Mammary epithelial cell (primary cell): ENCODE measurements at regions of chr14 and their contacts with region 1.

Region 1: GRCh38 chr14:22556990-22557623 is 31.9 kb downstream of the DAD1 start:
- DNase-seq: peak; percentile 67
- H3K4me3 ChIP-seq: peak overlapping the region in 2 of 3 experiments; percentile 27 to 41
- H3K27ac ChIP-seq: peak overlapping the region; percentile 48
- H3K4me1 ChIP-seq: peaks cover 28% of the 10 kb centered on the region
- H3K27me3 ChIP-seq: no peaks in the 10 kb centered on the region
- CTCF ChIP-seq: peak; percentile 85

Region 2: DNA sequence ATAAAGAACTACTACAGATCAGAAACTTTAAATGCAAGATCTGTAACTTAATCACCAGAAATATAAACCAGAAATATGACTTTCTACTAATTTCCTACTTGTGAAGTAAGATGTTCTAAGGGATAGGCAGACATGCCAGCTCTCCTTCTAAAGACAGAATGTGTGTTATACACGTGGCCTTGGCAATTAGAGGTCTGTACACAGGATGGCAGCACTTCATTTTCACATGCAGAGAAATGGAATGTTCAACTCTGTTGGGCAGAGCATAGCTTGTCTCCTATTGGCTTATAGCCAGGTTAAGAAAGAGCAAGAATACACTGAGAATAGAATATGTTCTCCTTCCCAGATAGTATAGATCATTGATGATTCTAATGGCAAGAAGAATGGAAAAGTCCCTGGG is 371.9 kb before region 1 on chr14:
- CTCF ChIA-PET with region 1: no interaction called
- dilution Hi-C with region 1: no loop called
- in situ Hi-C with region 1: no loop called
- intact Hi-C with region 1: no loop called
- DNase-seq: peak; percentile 25
- H3K4me3 ChIP-seq: no peak overlapping the region
- H3K27ac ChIP-seq: no peak overlapping the region
- H3K4me1 ChIP-seq: no peaks in the 10 kb centered on the region
- H3K27me3 ChIP-seq: no peaks in the 10 kb centered on the region
- CTCF ChIP-seq: peak in 1 of 2 donors; percentile 32

Region 3: DNA sequence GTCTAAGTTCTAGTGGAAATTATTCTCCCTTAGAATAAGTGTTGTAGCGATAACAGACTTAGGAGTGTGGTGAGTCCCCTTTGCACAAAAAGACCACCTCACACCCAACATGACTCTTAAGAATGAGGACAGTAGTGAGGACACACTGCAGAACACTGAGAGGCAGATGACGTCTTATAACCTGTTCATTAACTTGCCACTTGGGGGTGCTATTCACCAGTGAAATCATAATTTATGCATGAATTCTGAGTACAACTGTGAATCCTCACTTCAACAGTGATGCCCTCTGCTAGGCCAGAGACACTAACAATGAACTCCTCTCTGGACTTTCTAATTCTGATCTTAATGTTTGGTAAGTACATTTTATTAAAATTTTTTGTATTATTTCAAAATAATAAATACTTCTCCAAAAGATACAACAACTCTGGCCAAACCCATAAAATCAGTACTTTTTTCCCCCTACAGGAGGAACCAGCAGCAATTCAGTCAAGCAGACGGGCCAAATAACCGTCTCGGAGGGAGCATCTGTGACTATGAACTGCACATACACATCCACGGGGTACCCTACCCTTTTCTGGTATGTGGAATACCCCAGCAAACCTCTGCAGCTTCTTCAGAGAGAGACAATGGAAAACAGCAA is 242.8 kb before region 1 on chr14:
- CTCF ChIA-PET with region 1: no interaction called
- dilution Hi-C with region 1: no loop called
- in situ Hi-C with region 1: no loop called
- intact Hi-C with region 1: loop called (anchors 5 kb)
- DNase-seq: peak; percentile 51
- H3K4me3 ChIP-seq: no peak overlapping the region
- H3K27ac ChIP-seq: no peak overlapping the region
- H3K4me1 ChIP-seq: peaks cover 7% of the 10 kb centered on the region
- H3K27me3 ChIP-seq: no peaks in the 10 kb centered on the region
- CTCF ChIP-seq: peak; percentile 67 to 71

Region 4: GRCh38 chr14:22491683-22492621 is 65.2 kb before region 1 on chr14:
- CTCF ChIA-PET with region 1: no interaction called
- dilution Hi-C with region 1: no loop called
- in situ Hi-C with region 1: no loop called
- intact Hi-C with region 1: loop called (anchors 2 kb)
- DNase-seq: no peak
- H3K4me3 ChIP-seq: no peak overlapping the region
- H3K27ac ChIP-seq: no peak overlapping the region
- H3K4me1 ChIP-seq: no peaks in the 10 kb centered on the region
- H3K27me3 ChIP-seq: peaks cover 6% of the 10 kb centered on the region
- CTCF ChIP-seq: no peak

Region 5: GRCh38 chr14:22614224-22614799 is 57.2 kb after region 1 on chr14:
- CTCF ChIA-PET with region 1: no interaction called
- dilution Hi-C with region 1: no loop called
- in situ Hi-C with region 1: no loop called
- intact Hi-C with region 1: no loop called
- DNase-seq: peak; percentile 91
- H3K4me3 ChIP-seq: no peak overlapping the region
- H3K27ac ChIP-seq: peak overlapping the region; percentile 71
- H3K4me1 ChIP-seq: peaks cover 18% of the 10 kb centered on the region
- H3K27me3 ChIP-seq: no peaks in the 10 kb centered on the region
- CTCF ChIP-seq: no peak

Region 6: GRCh38 chr14:22653012-22653621 is 96.0 kb after region 1 on chr14:
- CTCF ChIA-PET with region 1: interaction called, 4 read pairs
- dilution Hi-C with region 1: no loop called
- in situ Hi-C with region 1: loop called in 1 of 2 experiments (anchors 5 kb)
- intact Hi-C with region 1: loop called (anchors 1 kb)
- DNase-seq: peak; percentile 67
- H3K4me3 ChIP-seq: no peak overlapping the region
- H3K27ac ChIP-seq: no peak overlapping the region
- H3K4me1 ChIP-seq: no peaks in the 10 kb centered on the region
- H3K27me3 ChIP-seq: no peaks in the 10 kb centered on the region
- CTCF ChIP-seq: peak; percentile 95 to 98

Region 7: GRCh38 chr14:22766456-22767322 is 209.6 kb after region 1 on chr14 and contains the start of gene OXA1L:
- CTCF ChIA-PET with region 1: no interaction called
- dilution Hi-C with region 1: no loop called
- in situ Hi-C with region 1: no loop called
- intact Hi-C with region 1: loop called (anchors 5 kb)
- DNase-seq: peak; percentile 94
- H3K4me3 ChIP-seq: peak within 1 kb of the TSS; percentile 76 to 96 (median 78)
- H3K27ac ChIP-seq: peak within 1 kb of the TSS; percentile 92
- H3K4me1 ChIP-seq: peaks cover 12% of the 10 kb centered on the region
- H3K27me3 ChIP-seq: no peaks in the 10 kb centered on the region
- CTCF ChIP-seq: no peak
- total RNA-seq, gene OXA1L: 34.3 to 76.3 TPM

Region 8: DNA sequence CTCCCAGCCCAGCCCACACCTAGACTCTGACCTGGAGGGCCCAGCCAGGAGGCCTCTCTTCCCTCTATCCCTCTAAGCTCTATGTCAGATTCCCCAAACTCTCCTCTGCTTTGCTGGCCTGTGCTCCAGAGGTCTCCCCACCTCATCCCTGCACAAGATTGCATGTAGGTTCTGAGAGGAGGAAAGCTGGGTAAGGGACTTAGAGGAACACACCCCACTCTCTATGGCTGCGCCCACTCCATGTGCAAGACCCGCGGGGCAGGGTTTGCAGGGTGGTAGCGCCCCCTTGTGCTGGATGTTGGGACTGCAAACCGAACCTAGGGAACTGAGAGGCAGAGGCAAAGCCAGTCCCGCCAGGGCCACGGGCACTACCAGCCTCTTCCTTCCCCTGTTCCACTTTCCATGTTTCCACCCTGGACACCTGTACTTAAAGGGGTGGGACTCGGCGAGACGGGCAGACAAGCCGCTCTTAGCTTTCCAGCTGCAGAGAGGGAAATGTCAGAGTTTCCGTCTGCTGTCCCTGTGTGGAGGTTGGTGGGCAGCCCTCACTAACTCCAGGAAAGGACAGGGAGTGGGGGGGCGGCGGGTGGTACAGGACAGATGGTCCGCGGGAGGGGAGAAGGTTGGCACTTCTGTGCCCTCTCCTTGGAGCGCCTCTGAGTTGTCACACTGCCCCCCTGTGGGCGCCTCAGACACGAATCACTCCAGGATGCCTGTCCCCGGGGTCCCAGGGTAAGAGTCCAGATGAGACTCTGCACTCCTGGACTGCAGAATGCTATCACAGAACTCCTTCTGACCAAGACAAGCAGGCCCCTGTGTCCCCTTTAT is 296.0 kb after region 1 on chr14:
- CTCF ChIA-PET with region 1: no interaction called
- dilution Hi-C with region 1: no loop called
- in situ Hi-C with region 1: loop called (anchors 25 kb)
- intact Hi-C with region 1: loop called (anchors 1 kb)
- DNase-seq: peak; percentile 80
- H3K4me3 ChIP-seq: peak overlapping the region in 2 of 3 experiments; percentile 7 to 52
- H3K27ac ChIP-seq: peak overlapping the region; percentile 90
- H3K4me1 ChIP-seq: peaks cover 54% of the 10 kb centered on the region
- H3K27me3 ChIP-seq: no peaks in the 10 kb centered on the region
- CTCF ChIP-seq: peak; percentile 91 to 93

Region 9: DNA sequence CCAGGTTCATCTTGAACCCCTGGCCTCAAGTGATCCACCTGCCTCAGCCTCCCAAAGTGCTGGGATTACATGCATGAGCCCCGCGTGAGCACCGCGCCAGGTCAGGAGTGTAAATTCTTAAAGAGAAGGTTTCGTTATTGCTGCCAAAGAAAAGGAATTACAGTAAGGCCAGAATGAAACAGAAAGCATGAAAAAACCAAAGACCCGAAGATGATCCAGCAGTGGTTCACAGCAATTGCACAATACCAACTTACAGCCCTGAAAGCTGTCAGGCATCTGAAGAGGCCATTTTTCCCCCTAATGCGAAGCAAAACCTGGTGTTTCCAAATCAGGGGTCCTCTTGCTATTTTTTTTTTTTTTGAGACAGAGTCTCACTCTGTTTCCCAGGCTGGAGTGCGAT is 351.5 kb after region 1 on chr14:
- CTCF ChIA-PET with region 1: no interaction called
- dilution Hi-C with region 1: no loop called
- in situ Hi-C with region 1: no loop called
- intact Hi-C with region 1: no loop called
- DNase-seq: no peak
- H3K4me3 ChIP-seq: no peak overlapping the region
- H3K27ac ChIP-seq: no peak overlapping the region
- H3K4me1 ChIP-seq: peaks cover 4% of the 10 kb centered on the region
- H3K27me3 ChIP-seq: no peaks in the 10 kb centered on the region
- CTCF ChIP-seq: no peak

Region 10: DNA sequence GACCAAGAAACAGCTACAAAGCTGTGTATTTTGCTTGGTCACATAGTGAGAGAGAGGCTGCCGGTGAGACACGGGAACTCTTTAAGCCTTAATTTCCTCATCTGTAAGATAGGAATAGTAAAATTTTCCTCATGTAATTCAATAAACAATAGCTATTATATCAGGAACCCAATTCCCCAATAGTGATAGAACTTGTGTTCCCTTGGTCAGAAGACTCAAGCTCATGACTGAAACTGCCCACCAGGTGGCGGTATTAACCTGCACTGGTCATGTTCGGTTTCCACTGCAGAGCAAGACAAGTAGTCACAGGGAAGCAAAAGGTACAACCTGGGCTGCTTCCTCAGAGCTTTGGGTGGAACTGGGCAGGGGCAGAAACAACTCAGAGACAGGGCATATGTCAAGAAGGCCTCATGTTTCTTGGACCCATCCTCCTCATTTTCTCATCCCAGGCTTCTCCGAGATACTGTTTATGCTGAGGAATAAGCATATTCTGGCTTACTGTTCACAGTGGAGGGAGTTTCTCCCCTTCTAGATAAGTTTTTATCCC is 429.5 kb after region 1 on chr14:
- CTCF ChIA-PET with region 1: no interaction called
- dilution Hi-C with region 1: no loop called
- in situ Hi-C with region 1: no loop called
- intact Hi-C with region 1: loop called (anchors 2 kb)
- DNase-seq: peak; percentile 70
- H3K4me3 ChIP-seq: no peak overlapping the region
- H3K27ac ChIP-seq: no peak overlapping the region
- H3K4me1 ChIP-seq: no peaks in the 10 kb centered on the region
- H3K27me3 ChIP-seq: no peaks in the 10 kb centered on the region
- CTCF ChIP-seq: peak; percentile 92 to 93